Naive thymus-derived CD4-positive, alpha-beta T cell (primary cell): ENCODE measurements at regions of chr5 and their contacts with region 1.

Region 1: DNA sequence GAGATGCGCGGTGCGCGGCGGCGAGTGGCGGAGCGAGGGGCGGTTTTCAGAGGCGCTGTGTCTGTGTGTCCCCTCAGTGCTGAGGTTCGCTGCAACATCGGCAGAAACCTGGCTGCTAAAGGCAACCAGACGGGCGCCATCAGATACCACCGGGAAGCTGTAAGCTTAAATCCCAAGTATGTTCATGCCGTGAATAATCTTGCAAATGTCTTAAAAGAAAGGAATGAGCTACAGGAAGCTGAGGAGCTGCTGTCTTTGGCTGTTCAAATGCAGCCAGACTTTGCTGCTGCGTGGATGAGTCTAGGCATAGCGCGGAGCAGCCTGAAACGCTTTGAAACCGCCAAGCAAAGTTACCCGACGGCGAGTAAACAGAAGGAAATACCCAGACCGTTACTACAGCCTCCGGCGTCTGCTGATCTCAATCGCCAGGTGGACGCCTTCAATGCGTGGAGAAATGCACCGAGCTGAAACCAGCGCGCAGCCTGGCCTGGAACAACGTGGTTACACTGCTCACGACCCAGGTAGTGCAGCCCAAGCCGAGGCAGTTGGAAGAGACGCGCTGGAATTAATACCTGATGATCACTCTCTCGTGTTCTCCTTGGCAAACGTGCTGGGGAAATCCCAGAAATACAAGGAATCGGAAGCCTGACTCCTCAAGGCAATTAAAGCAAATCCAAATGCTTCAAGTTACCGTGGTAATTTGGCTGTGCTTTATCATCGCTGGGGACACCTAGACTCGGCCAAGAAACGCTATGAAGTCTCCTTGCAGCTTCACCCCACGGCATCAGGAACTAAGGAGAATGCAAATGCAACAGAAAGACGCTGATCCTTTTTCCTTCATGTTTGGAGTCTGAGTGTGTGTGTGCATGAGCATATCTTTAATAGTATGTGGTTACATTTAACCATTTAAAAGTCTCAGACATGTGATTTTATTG is 15.9 kb downstream of the OR2V1 start:
- DNase-seq: no peak
- ATAC-seq: no peak
- H3K4me3 ChIP-seq: no peak overlapping the region
- H3K4me3 Mint-ChIP-seq: peak overlapping the region in 4 of 10 donors; percentile 10 to 40 (median 22)
- H3K27ac ChIP-seq: no peak overlapping the region
- H3K27ac Mint-ChIP-seq: no peak overlapping the region
- H3K4me1 ChIP-seq: no peaks in the 10 kb centered on the region
- H3K4me1 Mint-ChIP-seq: peaks cover 0 to 14% (median 8%) of the 10 kb centered on the region in 7 donors
- H3K27me3 ChIP-seq: peaks cover 0 to 16% of the 10 kb centered on the region in 2 donors
- H3K27me3 Mint-ChIP-seq: peaks cover 61 to 91% (median 88%) of the 10 kb centered on the region in 5 donors

Region 2: DNA sequence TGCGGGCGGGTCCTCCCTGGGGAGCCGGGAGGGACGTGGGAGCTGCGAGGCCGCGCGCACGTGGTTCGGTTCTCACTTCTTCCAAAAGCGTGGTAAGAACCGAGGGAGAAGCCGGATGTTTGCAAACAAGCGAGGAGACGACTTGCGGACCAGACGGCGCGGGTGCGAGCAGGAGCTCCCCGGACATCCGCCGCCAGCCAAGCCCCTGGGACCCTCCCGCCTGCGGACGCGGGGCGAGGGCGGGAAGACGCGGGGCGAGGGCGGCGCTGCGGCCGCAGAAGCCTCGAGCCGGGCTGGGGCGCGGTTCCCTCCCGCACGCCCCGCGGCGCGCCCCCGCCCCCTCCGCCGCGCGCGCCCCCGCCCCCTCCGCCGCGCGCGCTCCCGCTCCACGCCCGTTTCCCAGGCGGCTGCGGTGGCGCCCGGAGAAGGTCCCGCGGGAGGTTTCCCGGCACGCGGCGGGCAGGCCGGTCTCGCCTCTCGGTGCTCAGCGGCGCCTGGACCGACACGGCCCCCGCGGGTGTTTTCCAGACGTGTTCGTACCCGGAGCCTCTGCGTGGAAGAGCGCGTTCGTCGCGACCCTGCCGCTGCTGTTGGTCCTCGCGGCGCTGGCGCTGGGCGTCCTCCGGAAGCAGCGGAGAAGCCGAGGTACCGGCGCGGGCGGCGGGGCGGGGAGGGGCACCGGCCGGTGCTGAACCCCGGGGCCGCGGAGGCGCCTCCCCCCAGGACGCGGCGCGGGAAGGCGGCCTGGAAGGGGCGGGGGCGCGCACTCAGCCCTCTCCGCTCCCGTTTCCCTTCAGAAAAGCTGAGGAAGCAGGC is 62.2 kb before region 1 on chr5:
- CTCF ChIA-PET with region 1: no interaction called
- POLR2A ChIA-PET with region 1: no interaction called
- intact Hi-C with region 1: loop called in 1 of 2 experiments (anchors 2 kb)
- DNase-seq: peak in 4 of 9 donors; percentile 9 to 16 (median 12)
- ATAC-seq: peak; percentile 23
- H3K4me3 ChIP-seq: peak overlapping the region; percentile 22
- H3K4me3 Mint-ChIP-seq: peak overlapping the region; percentile 75 to 92 (median 80)
- H3K27ac ChIP-seq: no peak overlapping the region
- H3K27ac Mint-ChIP-seq: no peak overlapping the region
- H3K4me1 ChIP-seq: peaks cover 4 to 8% of the 10 kb centered on the region in 2 donors
- H3K4me1 Mint-ChIP-seq: peaks cover 10 to 27% (median 21%) of the 10 kb centered on the region in 7 donors
- H3K27me3 ChIP-seq: peaks cover 0 to 18% of the 10 kb centered on the region in 2 donors
- H3K27me3 Mint-ChIP-seq: peaks cover 71 to 82% (median 79%) of the 10 kb centered on the region in 5 donors